ENCODE measurements at regions of chr2 and their contacts with region 1.

Region 1: GRCh38 chr2:132547074-132547687 is 122.8 kb downstream of the LYPD1 start:
- DNase-seq: peak; percentile 52
- CTCF ChIP-seq: peak; percentile 64

Region 2: GRCh38 chr2:132557694-132558093 is 10.5 kb after region 1 on chr2:
- CTCF ChIA-PET with region 1: interaction called, 20 read pairs
- POLR2A ChIA-PET with region 1: no interaction called
- DNase-seq: no peak
- CTCF ChIP-seq: no peak

Region 3: DNA sequence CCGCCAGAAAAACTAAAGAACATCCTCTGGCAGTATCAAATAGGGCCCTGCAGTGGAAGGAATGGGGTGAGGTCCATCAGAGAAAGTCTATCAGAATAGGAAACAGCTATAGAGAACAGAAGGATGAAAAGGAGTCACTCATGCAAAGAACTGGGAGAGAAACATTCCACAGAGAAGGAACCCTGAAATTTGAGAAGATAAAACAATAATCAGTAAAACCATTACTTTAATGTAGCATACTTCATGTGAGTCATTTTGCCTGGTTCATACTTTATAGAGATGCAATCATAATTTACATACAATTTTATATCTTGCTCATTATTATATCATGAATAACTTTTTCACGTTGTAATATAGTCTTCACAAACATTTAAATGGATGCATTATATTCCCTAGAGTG is 618.9 kb after region 1 on chr2:
- CTCF ChIA-PET with region 1: interaction called, 32 read pairs
- POLR2A ChIA-PET with region 1: no interaction called
- DNase-seq: no peak
- CTCF ChIP-seq: no peak

Region 4: DNA sequence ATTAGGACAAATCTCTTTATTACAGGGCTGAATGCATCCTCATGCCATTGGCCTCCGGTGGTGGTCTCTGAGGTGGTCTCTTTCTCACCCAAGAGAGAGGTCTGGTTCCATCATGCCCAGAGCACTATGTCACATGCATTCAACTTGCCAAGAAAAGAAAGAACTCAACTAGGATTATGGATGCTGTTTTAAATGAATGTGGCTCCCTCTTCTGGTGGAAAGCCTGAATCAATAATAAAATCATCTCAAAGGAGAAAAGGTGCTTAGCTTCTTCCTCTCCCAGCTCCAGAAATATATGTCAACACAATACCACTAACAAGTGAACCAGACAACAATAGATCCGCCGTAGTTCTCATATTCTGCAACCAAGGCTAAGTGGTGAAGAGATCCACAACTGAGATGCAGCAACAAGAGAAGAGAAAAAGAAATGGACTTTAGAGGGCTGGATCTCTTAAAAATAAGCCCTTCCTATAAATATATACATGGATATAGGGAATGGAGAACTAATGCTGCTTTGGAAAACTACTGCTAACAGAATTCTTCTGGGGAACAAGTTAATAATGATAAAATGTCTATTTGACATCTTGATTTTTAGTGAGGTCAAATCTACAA is 624.3 kb after region 1 on chr2:
- CTCF ChIA-PET with region 1: interaction called, 32 read pairs
- POLR2A ChIA-PET with region 1: no interaction called
- DNase-seq: peak; percentile 22
- CTCF ChIP-seq: peak; percentile 46

Region 5: DNA sequence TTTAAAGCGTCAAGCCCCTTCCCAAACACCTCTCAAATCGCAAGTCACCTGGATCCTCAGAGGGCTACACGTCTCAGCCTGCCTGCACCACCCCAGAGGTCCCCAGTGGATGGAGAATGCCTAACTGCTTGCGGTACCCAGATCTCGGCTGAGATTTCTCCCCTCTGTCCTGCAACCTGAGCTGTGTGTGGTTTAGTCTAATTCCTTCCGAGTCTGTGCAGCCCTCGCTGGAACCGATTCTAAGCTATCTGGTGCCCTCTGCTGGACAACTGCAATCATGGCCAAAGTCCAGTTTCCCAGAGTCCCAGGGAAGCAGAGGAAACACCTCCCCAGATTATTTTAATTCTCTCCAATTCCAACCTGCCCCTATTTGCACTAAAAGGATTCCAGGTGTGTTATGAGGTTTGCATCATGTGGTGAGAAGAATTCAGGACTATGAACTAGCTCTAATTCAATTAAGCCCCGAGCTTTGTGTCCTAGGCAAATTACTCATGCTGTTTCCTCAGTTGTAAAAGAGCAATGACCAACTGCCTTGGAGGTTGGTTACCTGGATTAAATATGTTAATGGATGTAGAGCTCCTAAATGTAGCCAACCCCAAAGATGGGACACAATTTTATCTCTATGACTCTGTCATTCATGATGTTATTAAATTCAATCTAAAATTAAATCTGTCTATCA is 1297.2 kb after region 1 on chr2:
- CTCF ChIA-PET with region 1: interaction called, 34 read pairs
- POLR2A ChIA-PET with region 1: no interaction called
- DNase-seq: peak; percentile 77
- CTCF ChIP-seq: peak; percentile 92

Measured in GM10248 (cell line).